Activated T-helper 1 cell treated with anti-CD3 and anti-CD28 coated beads, Interleukin-12 subunit alpha, Interleukin-12 subunit beta, Interleukin-2, Interleukin-4 antibody, amounts not matched to agents 30 ng/mL and 10 ng/mL and 1 ng/mL, durations not matched to agents 14 hours and 24 hours and 36 hours (primary cell): ENCODE measurements at regions of chr15 and their contacts with region 1.

Region 1: DNA sequence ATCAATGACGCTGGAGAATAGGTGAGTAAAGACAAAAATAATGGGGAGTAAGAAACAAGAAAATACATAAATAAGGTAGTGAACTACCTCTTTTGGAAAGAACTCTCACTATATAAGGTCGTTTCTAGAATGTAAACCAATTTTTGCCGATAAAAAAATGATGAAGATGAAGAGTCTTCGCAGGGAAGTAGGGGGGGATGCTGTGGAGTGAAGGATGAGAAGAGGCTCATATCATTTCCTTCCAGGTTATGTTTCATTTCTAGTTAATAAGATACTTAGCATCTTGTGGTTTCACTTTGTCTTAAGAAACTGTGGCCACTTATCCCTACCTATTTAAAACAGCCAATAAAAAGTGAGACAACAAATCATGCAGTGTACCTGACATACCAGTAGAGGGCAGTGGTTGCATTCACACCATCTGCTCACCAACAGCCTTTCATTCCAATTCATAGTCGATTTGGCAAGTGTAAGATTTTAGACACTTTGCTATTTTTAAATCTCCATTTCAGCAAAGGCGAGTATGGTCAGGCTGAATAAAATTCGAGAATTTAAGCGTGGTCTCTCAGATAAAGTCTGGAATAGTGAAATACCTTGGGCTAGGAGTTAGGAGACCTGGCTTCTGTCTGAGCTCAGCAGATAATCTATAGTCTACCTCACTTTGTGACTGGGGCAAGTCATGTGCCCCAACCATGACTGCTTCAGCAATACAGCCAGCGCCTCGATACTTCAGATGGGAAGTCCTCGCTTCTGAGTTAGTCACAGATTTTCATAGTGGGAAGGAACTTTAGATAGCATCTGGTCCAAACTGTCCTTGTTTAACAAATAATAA is 28.9 kb upstream of the ICE2 start:
- DNase-seq: peak; percentile 51
- H3K4me3 Mint-ChIP-seq: no peak overlapping the region
- H3K27ac Mint-ChIP-seq: peak overlapping the region; percentile 65
- H3K4me1 Mint-ChIP-seq: peaks cover 58% of the 10 kb centered on the region
- H3K27me3 Mint-ChIP-seq: no peaks in the 10 kb centered on the region

Region 2: DNA sequence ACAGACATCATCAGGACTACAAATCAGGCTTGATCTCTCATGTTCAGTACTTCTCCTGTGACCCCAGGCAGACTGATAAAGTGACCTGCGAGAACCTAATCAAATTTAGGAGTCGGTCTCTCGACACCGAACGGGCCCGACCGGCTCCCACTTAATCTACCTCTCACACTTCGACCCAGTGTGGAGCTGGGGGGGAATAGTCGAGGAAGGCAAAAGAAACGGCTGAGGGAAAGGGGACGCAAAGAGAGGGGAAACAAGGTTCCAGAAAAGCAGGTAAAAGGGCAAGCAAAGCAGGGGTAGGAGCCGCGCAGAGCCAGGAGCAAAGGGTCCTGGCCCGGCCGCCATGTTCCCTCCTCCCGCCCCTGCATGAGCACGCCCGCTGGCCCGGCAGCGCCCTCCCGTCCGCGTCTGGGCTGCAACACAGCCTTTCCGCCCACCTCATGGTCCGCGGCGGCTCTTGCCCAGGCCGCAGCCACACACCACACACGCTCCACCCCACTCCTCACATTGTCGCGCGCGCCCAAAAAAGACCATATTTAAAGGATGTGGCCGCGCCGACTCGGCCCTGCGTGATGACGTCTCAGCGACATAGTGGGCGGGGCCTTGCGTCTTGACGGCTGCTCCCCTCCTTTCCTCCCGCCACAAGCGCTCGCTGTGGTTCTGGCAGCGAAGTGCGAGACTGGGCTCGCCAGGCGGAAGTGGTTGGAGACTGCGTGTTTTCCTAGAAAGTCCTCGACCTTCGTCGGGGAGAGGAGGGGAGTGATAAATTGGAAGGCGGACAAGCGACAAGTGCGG is 29.0 kb before region 1 on chr15 and contains the start of gene ICE2:
- intact Hi-C with region 1: loop called (anchors 1 kb)
- DNase-seq: peak; percentile 95
- H3K4me3 Mint-ChIP-seq: peak within 1 kb of the TSS; percentile 97
- H3K27ac Mint-ChIP-seq: peak within 1 kb of the TSS; percentile 97
- H3K4me1 Mint-ChIP-seq: peaks cover 52% of the 10 kb centered on the region
- H3K27me3 Mint-ChIP-seq: no peaks in the 10 kb centered on the region
- total RNA-seq, gene ICE2: 51.9 and 56.1 TPM in 2 replicates

Region 3: DNA sequence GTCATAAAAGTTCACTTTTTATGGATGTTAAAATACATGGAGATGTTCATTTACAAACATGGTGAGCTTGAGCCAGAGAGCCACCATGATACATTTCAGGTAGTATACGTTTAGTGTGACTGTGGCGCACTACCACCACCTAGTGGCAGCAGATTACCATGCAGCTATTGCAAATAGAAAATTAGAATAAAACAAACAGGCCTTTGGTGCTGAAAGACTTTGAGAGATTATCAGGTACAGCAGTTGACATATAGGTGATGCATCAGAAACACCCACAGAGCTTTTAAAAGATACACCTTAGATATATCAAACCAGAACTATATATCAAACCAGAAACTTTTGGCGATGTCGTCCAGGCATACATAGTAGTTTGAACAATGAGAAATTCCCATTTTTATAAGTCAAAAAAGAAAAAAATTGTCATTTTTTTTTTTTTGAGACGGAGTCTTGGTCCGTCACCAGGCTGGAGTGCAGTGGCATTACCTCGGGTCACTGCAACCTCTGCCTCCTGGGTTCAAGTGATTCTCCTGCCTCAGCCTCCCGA is 13.1 kb after region 1 on chr15:
- intact Hi-C with region 1: loop called (anchors 1 kb)
- DNase-seq: peak; percentile 63
- H3K4me3 Mint-ChIP-seq: no peak overlapping the region
- H3K27ac Mint-ChIP-seq: peak overlapping the region; percentile 71
- H3K4me1 Mint-ChIP-seq: peaks cover 58% of the 10 kb centered on the region
- H3K27me3 Mint-ChIP-seq: no peaks in the 10 kb centered on the region

Region 4: DNA sequence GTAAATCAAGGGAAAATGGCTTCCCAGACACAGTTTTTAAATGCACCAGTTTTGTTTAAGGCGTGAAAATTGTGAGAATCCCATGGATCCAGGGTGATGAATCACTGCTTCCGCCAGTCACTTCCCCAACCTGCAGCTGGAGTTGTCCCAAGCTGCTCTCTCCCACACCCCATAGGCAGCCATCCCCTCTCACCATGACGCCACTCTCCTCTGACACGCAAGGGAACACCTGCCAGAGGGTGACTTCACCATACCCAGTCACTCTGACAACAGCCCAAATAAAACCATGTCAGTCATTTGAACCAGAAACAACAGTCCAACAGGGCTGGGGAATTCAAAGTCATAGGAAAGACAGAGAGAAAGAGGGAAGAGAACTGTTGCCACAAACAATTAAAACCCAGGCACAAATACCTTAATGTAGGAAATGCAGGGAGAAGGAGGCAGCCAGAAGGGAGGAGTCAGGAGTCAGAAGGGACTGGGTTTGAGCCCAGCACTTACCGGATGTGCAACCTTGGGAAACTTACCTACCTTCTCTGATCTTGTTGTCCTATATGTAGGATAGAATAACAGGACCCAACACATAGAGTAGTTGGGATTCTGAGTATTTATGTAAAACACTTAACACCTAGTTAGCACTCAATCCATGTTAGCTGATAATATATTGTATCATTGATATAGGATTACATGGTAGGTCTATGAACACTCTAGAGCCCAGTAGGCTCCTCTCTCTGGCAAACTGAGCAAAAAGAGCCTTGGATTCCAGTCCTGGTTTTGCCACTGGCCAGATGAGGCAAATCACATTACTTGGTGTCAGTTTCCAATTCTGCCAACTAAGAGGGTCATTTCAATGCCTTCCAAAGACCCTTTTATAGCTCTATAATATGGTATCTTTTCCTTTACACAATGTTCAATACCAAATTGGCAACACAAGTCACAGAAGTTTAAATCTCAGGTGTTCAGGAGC is 297.5 kb after region 1 on chr15:
- intact Hi-C with region 1: loop called (anchors 5 kb)
- DNase-seq: no peak
- H3K4me3 Mint-ChIP-seq: no peak overlapping the region
- H3K27ac Mint-ChIP-seq: no peak overlapping the region
- H3K4me1 Mint-ChIP-seq: peaks cover 67% of the 10 kb centered on the region
- H3K27me3 Mint-ChIP-seq: no peaks in the 10 kb centered on the region

Region 5: DNA sequence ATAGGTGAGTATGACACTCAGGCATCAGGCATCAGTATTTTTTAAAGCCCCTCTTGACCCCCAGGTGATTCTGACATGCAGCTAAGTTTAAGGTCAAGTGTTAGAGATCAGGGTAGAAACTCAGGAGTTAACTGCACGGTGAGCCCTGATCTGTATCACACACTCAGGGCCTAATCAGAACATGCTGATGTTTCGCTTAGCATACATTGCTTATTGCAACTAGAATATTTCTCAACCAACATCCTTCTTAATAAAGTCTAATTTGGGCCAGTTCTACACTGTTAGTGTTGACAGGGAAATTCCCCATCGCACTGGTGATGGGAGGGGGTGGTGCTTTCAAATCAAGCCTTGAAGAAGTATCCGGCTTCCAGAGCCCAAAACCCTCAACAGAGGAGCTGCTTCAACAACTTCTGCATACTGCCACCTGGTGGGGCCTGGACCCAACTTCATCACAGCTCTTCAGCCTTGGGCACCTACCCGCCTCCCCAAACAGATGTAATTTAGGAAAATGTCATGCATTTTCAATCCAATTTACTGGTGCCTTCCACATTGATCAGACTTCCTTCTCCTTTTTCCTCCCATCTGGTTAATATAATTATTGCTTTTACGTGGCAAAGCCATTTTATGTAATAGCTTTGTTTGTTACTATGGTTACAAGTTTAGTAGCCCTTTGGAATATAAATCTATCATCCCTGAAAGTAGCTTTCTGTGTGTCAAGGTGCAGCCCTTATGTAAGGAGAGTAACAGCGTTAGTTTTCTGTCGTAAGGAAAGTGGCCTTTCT is 409.1 kb after region 1 on chr15:
- intact Hi-C with region 1: loop called (anchors 1 kb)
- DNase-seq: peak; percentile 80
- H3K4me3 Mint-ChIP-seq: peak overlapping the region; percentile 17
- H3K27ac Mint-ChIP-seq: peak overlapping the region; percentile 64
- H3K4me1 Mint-ChIP-seq: peaks cover 32% of the 10 kb centered on the region
- H3K27me3 Mint-ChIP-seq: peaks cover 2% of the 10 kb centered on the region

Region 6: DNA sequence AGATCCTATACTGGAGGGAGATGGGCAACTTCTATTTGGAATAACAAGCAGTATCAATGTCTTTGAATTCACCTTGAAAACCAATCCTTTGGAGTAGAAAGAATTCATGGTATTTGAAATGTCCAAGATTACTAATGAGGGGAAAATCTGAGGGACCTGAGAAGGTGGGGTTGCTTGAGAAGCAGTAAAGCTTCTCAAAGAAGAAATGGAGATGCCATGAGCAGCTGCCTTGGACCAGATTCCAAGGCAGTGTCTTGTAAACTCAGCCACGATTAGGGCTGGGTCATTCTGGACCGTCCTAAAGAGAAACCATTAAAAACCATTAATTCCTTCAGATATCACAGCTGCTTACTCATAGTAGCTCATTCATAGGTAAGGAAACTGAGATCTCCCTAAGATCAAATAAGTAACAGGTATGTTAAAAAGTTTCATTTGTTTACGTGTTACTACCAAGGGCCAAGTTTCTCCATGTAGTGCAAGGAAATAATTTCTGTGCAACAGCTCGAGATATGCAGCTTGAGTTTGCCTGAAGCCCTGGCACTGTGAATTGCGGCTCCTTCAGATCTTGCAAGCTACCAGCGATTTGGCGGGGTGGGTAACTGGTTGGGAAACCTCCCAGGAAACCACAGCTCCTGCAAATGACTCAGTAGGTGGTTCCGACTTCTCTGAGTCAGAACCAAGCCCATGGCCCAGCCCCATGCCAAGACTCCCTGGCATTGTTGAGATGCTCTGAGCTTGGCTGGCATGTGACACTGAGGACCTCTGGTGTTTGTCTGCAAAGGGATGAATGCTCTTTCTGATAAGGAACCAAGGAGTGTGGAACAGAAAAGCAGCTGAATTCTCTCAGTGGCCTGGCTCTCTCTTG is 424.5 kb after region 1 on chr15:
- intact Hi-C with region 1: loop called (anchors 1 kb)
- DNase-seq: peak; percentile 34
- H3K4me3 Mint-ChIP-seq: no peak overlapping the region
- H3K27ac Mint-ChIP-seq: no peak overlapping the region
- H3K4me1 Mint-ChIP-seq: peaks cover 19% of the 10 kb centered on the region
- H3K27me3 Mint-ChIP-seq: peaks cover 12% of the 10 kb centered on the region

Region 7: DNA sequence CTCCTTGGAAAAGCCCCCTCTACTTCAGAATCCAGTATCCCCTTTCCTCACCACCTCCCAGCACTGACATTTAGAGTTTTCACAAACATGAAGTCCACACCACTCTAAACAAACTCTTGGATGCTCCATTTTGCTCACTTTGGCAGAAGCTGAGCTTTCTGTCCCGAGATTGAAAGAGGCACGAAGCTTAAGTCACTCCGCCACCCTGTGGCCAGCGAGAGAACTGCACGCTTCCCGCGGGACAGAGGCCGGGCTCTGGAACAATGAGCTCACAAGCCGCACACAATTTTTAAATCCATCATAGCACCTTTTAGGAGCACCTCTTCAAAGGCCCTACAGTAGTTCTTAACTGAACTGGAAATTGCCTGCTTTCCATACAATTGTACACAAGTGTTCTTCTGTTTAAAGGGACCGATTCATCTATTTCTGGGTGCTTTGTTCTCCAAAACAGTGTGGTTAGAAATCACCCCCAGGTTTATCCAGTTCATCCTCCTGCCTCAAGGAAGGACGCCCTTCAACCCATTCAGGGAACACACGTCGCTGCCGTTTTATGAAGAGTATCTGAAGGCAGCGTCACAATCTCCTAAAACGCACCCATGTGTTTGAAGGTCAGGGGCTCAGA is 1326.4 kb after region 1 on chr15:
- intact Hi-C with region 1: loop called (anchors 2 kb)
- DNase-seq: peak; percentile 59
- H3K4me3 Mint-ChIP-seq: no peak overlapping the region
- H3K27ac Mint-ChIP-seq: no peak overlapping the region
- H3K4me1 Mint-ChIP-seq: peaks cover 7% of the 10 kb centered on the region
- H3K27me3 Mint-ChIP-seq: peaks cover 16% of the 10 kb centered on the region